ENCODE measurements at regions of chr4 and their contacts with region 1.

Region 1: GRCh38 chr4:127327491-127327890 is 305.3 kb upstream of the INTU start:
- DNase-seq: no peak
- ATAC-seq: no peak
- H3K4me3 ChIP-seq: no peak overlapping the region
- H3K27ac ChIP-seq: no peak overlapping the region
- H3K4me1 ChIP-seq: no peaks in the 10 kb centered on the region
- H3K27me3 ChIP-seq: no peaks in the 10 kb centered on the region

Region 2: DNA sequence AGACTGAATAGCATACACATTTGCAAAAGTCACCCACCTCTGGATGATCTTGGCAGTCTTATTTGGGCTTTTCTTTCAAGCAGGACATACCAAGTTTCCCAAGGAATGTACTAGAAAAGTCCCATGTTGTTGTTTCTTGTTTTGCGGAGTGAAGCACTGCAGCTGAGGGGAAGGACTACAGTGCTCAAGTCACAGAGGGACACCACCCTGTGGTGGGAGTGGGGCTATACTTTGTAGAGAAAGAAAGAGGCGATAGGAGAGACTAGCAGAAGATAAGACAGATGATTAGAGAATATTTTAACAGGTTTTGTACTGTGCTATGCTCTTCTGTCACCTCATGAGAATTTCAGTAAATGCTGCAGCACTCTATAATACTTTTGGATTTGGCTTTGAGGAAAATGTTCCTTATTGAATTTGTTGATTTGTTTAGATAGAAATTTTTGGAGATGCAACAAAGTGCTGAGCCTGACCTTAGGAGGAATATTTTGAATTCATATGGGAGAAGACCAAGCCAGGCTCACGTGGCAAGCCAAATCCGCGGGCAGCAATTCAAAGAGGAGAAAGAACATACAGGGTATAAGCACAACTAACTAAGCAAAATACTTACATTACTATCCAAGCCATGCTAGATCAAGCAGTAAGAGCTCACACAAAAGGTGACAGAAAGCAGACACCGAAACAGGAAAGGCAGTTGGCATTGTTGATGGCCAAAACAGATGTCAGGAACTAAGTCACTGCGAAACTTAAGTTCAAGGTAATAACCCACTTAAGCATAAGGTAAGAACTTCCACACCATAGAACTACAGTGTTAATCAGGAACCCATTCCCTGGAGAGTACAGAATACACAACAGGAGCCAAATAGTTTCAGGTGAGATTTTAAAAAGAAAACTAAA is 25.0 kb after region 1 on chr4:
- intact Hi-C with region 1: loop called in 1 of 4 experiments (anchors 2 kb)
- DNase-seq: peak in 1 of 3 donors; percentile 29
- ATAC-seq: no peak
- H3K4me3 ChIP-seq: no peak overlapping the region
- H3K27ac ChIP-seq: no peak overlapping the region
- H3K4me1 ChIP-seq: no peaks in the 10 kb centered on the region
- H3K27me3 ChIP-seq: no peaks in the 10 kb centered on the region

Region 3: GRCh38 chr4:127521463-127521862 is 194.0 kb after region 1 on chr4:
- intact Hi-C with region 1: no loop called
- DNase-seq: peak; percentile 28 to 80 (median 63)
- ATAC-seq: no peak
- H3K4me3 ChIP-seq: no peak overlapping the region
- H3K27ac ChIP-seq: no peak overlapping the region
- H3K4me1 ChIP-seq: no peaks in the 10 kb centered on the region
- H3K27me3 ChIP-seq: no peaks in the 10 kb centered on the region

Measured in right cardiac atrium (tissue), 5 donors.